ENCODE measurements at regions of chr22 and their contacts with region 1.

Region 1: DNA sequence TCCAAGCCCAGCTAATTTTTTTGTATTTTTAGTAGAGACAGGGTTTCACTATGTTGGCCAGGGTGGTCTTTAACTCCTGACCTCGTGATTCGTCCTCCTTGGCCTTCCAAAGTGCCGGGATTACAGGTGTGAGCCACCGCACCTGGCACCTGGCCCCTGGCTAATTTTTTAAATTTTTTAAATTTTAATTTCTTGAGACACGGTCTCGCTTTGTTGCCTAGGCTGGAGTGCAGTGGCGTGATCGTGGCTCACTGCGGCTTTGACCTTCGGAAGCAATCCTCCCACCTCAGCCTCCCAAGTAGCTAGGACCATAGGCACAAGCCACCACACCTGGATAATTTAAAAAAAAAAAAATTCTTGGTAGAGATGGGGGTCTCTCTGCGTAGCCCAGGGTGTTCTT is 14.6 kb downstream of the PPP6R2 start:
- DNase-seq: no peak
- H3K4me3 ChIP-seq: no peak overlapping the region
- CTCF ChIP-seq: no peak

Region 2: GRCh38 chr22:50481440-50482106 is 123.8 kb after region 1 on chr22 and contains the start of gene ADM2:
- in situ Hi-C with region 1: loop called (anchors 10 kb)
- DNase-seq: no peak
- H3K4me3 ChIP-seq: peak within 1 kb of the TSS; percentile 34
- CTCF ChIP-seq: no peak

Measured in astrocyte of the cerebellum (primary cell).